ENCODE measurements at regions of chr10 and their contacts with region 1.

Region 1: GRCh38 chr10:104268716-104269645 is at the start of gene GSTO2:
- DNase-seq: peak; percentile 99
- H3K4me3 Mint-ChIP-seq: peak within 1 kb of the TSS; percentile 87
- H3K27ac Mint-ChIP-seq: peak within 1 kb of the TSS; percentile 90
- H3K4me1 Mint-ChIP-seq: peaks cover 29% of the 10 kb centered on the region
- H3K27me3 Mint-ChIP-seq: peaks cover 2% of the 10 kb centered on the region
- total RNA-seq, gene GSTO2: 0.77 and 1.3 TPM in 2 replicates

Region 2: GRCh38 chr10:103854686-103855423 is 414.1 kb before region 1 on chr10:
- intact Hi-C with region 1: no loop called
- DNase-seq: peak; percentile 64
- H3K4me3 Mint-ChIP-seq: peak overlapping the region; percentile 86
- H3K27ac Mint-ChIP-seq: no peak overlapping the region
- H3K4me1 Mint-ChIP-seq: peaks cover 11% of the 10 kb centered on the region
- H3K27me3 Mint-ChIP-seq: peaks cover 76% of the 10 kb centered on the region

Region 3: GRCh38 chr10:103918053-103918846 is 350.7 kb before region 1 on chr10 and contains the start of gene STN1:
- intact Hi-C with region 1: loop called (anchors 5 kb)
- DNase-seq: peak; percentile 98
- H3K4me3 Mint-ChIP-seq: peak within 1 kb of the TSS; percentile 97
- H3K27ac Mint-ChIP-seq: peak within 1 kb of the TSS; percentile 97
- H3K4me1 Mint-ChIP-seq: peaks cover 33% of the 10 kb centered on the region
- H3K27me3 Mint-ChIP-seq: no peaks in the 10 kb centered on the region
- total RNA-seq, gene STN1: 23.6 and 24.1 TPM in 2 replicates

Region 4: DNA sequence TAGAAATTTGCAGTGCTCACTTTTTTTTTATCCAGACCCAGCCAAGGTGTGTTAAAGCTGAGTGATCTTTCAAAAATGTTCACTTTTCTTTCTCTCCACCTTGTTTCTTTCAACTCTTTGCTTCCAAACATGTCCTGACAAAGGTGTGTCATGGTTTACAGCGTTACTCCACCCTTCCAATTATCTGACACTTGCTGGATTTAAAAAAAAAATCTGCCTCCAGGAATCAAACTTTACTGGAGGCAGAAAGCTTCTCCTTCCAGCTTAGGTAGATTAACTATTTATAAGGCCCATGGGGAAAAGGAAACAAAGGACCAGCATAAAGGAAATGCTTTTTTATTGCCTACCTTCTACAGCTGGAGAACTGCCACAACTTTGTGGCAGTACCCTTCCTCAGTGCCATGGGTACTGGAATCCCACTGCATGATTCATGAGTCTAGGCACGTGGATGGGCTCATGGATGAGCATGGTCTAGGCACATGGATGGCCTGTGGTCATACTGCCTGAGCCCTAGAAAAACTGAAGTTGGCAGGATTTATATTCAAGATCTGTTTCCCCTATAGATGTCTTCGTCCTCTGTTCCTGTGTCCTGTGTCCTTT is 183.1 kb before region 1 on chr10 and contains the start of gene COL17A1:
- intact Hi-C with region 1: no loop called
- DNase-seq: no peak
- H3K4me3 Mint-ChIP-seq: no peak within 1 kb of the TSS
- H3K27ac Mint-ChIP-seq: no peak within 1 kb of the TSS
- H3K4me1 Mint-ChIP-seq: no peaks in the 10 kb centered on the region
- H3K27me3 Mint-ChIP-seq: peaks cover 7% of the 10 kb centered on the region
- total RNA-seq, gene COL17A1: not detected in 2 replicates

Region 5: DNA sequence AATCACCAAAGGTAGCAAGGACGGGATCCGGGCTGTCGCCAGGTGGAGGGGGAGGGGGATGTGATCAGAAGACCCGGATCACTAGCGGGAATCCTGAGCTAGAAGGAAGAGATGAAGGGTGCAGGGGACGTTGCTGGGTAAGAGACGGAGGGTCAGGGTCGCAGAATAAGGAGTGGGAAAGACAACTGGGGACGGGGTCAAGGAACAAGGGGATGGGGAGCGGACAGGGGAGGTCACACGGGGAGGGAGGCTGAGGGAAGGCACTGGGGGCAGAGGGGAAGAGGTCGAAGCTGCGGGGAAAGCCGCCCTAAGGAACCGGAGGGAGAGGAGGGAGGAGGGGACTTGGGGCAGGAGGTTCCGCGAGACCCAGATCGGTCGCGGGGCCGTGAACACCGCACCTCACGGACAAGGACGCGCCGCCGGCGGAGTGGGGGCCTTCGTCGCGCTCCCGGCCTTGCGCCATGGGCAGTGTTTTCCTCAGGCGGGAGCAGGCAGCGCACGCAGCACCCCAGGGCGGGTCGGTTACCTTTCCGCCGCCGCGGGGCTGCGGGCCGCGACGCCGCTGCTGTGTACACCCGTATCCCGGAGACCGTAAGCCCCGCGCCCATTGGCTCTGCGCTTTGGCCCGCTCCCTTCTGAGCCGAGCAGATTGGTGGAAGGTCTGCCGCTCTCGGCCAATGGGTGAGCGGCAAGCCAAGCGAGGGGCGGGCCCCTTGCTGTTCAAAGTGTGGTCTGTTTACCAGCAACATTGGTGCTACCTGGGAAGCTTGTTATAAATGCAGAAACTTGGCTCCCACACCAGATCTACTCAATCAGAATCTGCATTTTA is 37.0 kb before region 1 on chr10 and contains the start of gene CFAP43:
- intact Hi-C with region 1: loop called (anchors 1 kb)
- DNase-seq: peak; percentile 100
- H3K4me3 Mint-ChIP-seq: peak within 1 kb of the TSS; percentile 87
- H3K27ac Mint-ChIP-seq: peak within 1 kb of the TSS; percentile 72
- H3K4me1 Mint-ChIP-seq: peaks cover 8% of the 10 kb centered on the region
- H3K27me3 Mint-ChIP-seq: peaks cover 42% of the 10 kb centered on the region
- total RNA-seq, gene CFAP43: not detected in 2 replicates

Region 6: GRCh38 chr10:104254493-104255310 is 14.3 kb before region 1 on chr10 and contains the start of gene GSTO1:
- intact Hi-C with region 1: loop called (anchors 1 kb)
- DNase-seq: peak; percentile 87
- H3K4me3 Mint-ChIP-seq: peak within 1 kb of the TSS; percentile 96
- H3K27ac Mint-ChIP-seq: peak within 1 kb of the TSS; percentile 95
- H3K4me1 Mint-ChIP-seq: peaks cover 46% of the 10 kb centered on the region
- H3K27me3 Mint-ChIP-seq: peaks cover 14% of the 10 kb centered on the region
- total RNA-seq, gene GSTO1: 136 and 140 TPM in 2 replicates

Region 7: DNA sequence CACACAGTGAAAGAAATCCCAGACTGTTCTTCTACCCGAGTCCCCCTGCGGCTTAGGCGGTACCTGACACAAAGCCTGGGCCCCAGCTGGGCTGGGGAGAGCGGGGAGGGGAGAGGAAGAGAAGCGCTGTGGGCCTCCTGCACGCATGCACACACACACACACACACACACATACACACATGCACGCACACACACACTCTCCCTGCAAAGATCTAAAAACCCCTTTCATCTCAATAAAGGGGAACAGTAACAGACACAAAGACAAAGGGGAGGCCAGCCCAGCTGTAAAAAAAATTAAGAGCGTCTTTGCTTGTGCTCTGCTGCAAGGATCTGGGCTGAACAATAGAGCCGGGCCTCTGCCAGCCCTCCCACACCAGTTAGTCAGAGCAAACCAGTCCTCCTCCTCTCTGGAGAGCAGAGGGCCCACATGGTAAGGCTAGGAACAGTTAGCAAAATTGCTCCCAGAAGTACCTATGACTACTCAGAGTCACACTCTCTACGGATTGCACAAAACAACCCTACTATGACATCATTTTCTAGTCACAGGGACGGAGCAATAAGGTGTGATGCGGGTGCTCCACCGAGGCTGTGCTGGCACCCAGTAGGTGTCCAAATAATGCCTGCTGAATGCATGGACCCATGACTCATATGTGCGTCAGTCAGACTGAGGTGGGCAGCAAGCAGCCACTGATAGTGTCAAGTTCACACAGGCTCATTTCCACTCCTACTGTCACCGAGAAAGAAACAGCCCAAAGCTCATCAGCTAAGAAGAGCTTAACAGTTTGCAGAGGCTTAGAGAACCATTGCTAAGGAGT is 60.1 kb after region 1 on chr10:
- intact Hi-C with region 1: loop called (anchors 2 kb)
- DNase-seq: peak; percentile 88
- H3K4me3 Mint-ChIP-seq: peak overlapping the region; percentile 86
- H3K27ac Mint-ChIP-seq: peak overlapping the region; percentile 91
- H3K4me1 Mint-ChIP-seq: peaks cover 89% of the 10 kb centered on the region
- H3K27me3 Mint-ChIP-seq: no peaks in the 10 kb centered on the region

Measured in activated CD4-positive, alpha-beta T cell treated with anti-CD3 and anti-CD28 coated beads, Interleukin-2, amount 10 ng/mL, durations not matched to agents 24 days and 14 days (primary cell).